ENCODE measurements at regions of chr6 and their contacts with region 1.

Region 1: DNA sequence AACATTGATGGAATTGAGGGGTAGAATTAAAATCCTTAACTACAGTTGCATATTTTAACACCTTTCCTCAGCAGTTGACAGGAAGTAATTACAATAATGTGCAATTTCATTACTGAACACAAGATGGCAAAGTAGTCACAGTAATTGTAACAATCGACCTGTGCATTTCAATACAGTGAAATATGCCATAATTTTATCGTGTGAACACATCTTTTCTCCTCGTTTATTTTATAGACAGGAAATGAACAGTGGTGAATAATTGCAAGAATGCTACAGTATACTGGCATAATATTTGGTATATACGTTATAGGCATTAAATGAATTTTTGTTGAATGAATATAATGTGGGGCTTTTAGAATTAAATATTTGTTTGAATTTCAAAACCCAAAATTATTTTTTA is 25.0 kb downstream of the CYB5R4 start:
- DNase-seq: peak; percentile 48
- H3K4me3 ChIP-seq: no peak overlapping the region; a peak in 1 of 4 replicates
- H3K27ac ChIP-seq: no peak overlapping the region
- H3K4me1 ChIP-seq: peaks cover 0 to 4% of the 10 kb centered on the region in 2 experiments; a peak in 2 of 4 replicates
- H3K27me3 ChIP-seq: no peaks in the 10 kb centered on the region
- CTCF ChIP-seq: peak; percentile 82
- EP300 ChIP-seq: no peak
- RAD21 ChIP-seq: peak; percentile 97

Region 2: DNA sequence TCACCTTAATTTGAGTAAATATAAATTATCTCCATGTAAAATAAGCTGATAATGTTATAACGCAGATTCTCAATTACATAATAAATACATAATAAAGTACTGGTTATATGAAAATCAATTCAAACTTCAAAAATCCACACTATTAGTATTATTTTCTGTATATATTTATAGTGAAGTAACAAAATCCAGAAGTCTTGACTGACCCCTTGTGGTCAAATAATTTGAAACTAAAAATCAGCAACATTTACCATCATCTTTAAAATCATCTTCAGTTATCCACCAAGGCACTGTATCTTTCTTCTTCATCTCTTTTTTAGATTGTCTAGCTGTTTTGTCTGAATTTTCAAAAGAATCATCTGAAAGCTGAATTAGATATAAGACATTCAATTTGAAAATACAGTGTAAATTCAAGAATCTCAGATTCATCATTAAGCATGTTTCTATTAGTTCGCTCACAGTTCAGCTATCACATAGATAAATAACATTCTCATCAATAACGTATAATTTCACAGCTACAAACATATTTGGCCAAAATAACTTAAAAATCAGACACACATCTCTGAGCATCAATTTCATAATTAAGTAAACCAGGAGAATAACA is 336.4 kb after region 1 on chr6:
- CTCF ChIA-PET with region 1: interaction called, 31 read pairs
- POLR2A ChIA-PET with region 1: no interaction called
- DNase-seq: peak; percentile 7
- H3K4me3 ChIP-seq: no peak overlapping the region
- H3K27ac ChIP-seq: no peak overlapping the region
- H3K4me1 ChIP-seq: peaks cover 0 to under 1% of the 10 kb centered on the region in 2 experiments; a peak in 2 of 4 replicates
- H3K27me3 ChIP-seq: no peaks in the 10 kb centered on the region
- CTCF ChIP-seq: peak; percentile 76
- EP300 ChIP-seq: no peak
- RAD21 ChIP-seq: peak; percentile 72

Region 3: GRCh38 chr6:84227434-84228197 is 343.1 kb after region 1 on chr6 and contains the start of gene CEP162:
- CTCF ChIA-PET with region 1: interaction called, 31 read pairs
- POLR2A ChIA-PET with region 1: no interaction called
- DNase-seq: peak; percentile 85
- H3K4me3 ChIP-seq: peak within 1 kb of the TSS; percentile 85 to 99
- H3K27ac ChIP-seq: peak within 1 kb of the TSS; percentile 73 to 96
- H3K4me1 ChIP-seq: peaks cover 6% of the 10 kb centered on the region in 2 experiments; a peak in 2 of 4 replicates
- H3K27me3 ChIP-seq: no peaks in the 10 kb centered on the region
- CTCF ChIP-seq: peak; percentile 90
- EP300 ChIP-seq: no peak; a peak in 1 of 4 replicates
- RAD21 ChIP-seq: peak; percentile 45
- polyA plus RNA-seq, gene CEP162: 1.2 and 1.4 TPM in 2 replicates

Measured in SK-N-SH (cell line).